PC-9 (cell line): ENCODE measurements at regions of chr5 and their contacts with region 1.

Region 1: GRCh38 chr5:151651997-151652645 is 34.6 kb downstream of the SPARC start:
- DNase-seq: peak; percentile 60 to 83
- H3K4me3 ChIP-seq: no peak overlapping the region
- H3K27ac ChIP-seq: no peak overlapping the region
- H3K4me1 ChIP-seq: peaks cover 13% of the 10 kb centered on the region
- H3K27me3 ChIP-seq: no peaks in the 10 kb centered on the region
- CTCF ChIP-seq: peak; percentile 94

Region 2: DNA sequence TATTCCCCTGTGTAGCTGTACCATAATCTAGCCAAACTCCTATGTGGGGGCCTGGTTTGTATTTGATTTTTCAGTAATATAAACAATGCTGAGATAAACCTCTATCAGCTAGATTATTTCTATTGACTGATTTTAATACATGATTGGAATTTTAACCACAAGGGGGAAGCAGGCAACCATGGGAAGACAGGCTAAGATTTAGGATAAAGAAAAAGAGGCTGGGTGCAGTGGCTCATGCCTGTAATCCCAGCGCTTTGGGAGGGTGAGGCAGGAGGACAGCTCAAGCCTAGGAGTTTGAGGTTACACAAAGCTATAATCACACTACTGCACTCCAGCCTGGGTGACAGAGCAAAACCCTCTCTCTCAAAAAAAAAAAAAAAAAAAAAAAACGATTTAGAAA is 649.9 kb before region 1 on chr5:
- CTCF ChIA-PET with region 1: interaction called, 3 read pairs
- POLR2A ChIA-PET with region 1: no interaction called
- intact Hi-C with region 1: loop called (anchors 5 kb)
- DNase-seq: peak in 1 of 2 experiments; percentile 39
- H3K4me3 ChIP-seq: no peak overlapping the region
- H3K27ac ChIP-seq: no peak overlapping the region
- H3K4me1 ChIP-seq: no peaks in the 10 kb centered on the region
- H3K27me3 ChIP-seq: no peaks in the 10 kb centered on the region
- CTCF ChIP-seq: peak; percentile 69

Region 3: GRCh38 chr5:151126199-151126645 is 525.9 kb before region 1 on chr5:
- CTCF ChIA-PET with region 1: no interaction called
- POLR2A ChIA-PET with region 1: no interaction called
- intact Hi-C with region 1: loop called (anchors 1 kb)
- DNase-seq: peak; percentile 46 to 64
- H3K4me3 ChIP-seq: no peak overlapping the region
- H3K27ac ChIP-seq: no peak overlapping the region
- H3K4me1 ChIP-seq: peaks cover 7% of the 10 kb centered on the region
- H3K27me3 ChIP-seq: no peaks in the 10 kb centered on the region
- CTCF ChIP-seq: peak; percentile 89

Region 4: DNA sequence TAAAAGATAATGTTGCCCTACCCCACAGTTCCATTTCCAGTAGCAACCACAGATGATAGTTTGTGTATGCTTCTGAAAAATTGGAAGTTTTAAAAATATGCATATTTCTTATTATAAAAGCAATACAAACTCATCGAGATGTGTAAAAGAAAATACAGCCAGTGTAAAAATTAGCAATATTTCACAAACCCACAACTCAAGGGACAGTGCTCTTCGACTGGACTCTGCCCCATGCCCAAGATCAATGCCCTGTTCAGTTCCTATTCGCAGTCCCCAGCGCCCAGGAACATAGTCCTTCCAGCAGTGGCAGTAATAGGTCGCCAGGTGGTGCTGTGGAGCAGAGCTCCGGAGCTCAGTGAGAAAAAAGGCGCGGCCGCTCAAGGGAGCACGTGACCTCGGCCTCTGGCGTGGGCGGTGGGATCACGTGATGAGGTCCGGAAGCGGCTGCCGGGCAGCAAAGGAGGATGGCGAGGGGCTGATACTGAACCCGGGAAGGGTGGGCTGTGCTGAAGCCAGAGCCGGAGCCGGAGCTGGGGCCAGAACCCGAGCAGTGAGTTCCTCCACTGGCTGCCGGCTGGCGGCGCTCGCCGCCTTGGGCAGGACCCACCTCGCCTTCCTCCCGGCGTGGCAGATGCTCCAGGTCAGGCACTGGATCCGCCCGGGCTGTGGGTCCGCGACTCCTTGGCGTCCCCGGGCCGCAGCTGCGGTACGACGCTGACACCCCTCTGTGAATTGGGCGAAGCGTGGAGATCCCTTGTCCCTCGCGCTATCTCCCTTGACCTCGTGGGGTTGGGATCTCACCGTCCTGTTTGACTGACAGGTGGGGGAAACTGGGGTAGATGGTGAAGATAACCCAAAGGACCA is 204.7 kb before region 1 on chr5 and contains the start of gene SLC36A1:
- CTCF ChIA-PET with region 1: interaction called, 23 read pairs
- POLR2A ChIA-PET with region 1: no interaction called
- intact Hi-C with region 1: loop called (anchors 1 kb)
- DNase-seq: peak; percentile 71 to 89
- H3K4me3 ChIP-seq: peak within 1 kb of the TSS; percentile 70
- H3K27ac ChIP-seq: no peak within 1 kb of the TSS
- H3K4me1 ChIP-seq: peaks cover 7% of the 10 kb centered on the region
- H3K27me3 ChIP-seq: no peaks in the 10 kb centered on the region
- CTCF ChIP-seq: peak; percentile 93
- total RNA-seq, gene SLC36A1: 7.4 and 11.0 TPM in 2 replicates

Region 5: GRCh38 chr5:151523335-151523734 is 128.8 kb before region 1 on chr5:
- CTCF ChIA-PET with region 1: interaction called, 17 read pairs
- POLR2A ChIA-PET with region 1: no interaction called
- intact Hi-C with region 1: loop called (anchors 1 kb)
- DNase-seq: peak in 1 of 2 experiments; percentile 41
- H3K4me3 ChIP-seq: no peak overlapping the region
- H3K27ac ChIP-seq: no peak overlapping the region
- H3K4me1 ChIP-seq: peaks cover 5% of the 10 kb centered on the region; the same call in 1 of the 2 replicates
- H3K27me3 ChIP-seq: no peaks in the 10 kb centered on the region
- CTCF ChIP-seq: peak; percentile 76

Region 6: DNA sequence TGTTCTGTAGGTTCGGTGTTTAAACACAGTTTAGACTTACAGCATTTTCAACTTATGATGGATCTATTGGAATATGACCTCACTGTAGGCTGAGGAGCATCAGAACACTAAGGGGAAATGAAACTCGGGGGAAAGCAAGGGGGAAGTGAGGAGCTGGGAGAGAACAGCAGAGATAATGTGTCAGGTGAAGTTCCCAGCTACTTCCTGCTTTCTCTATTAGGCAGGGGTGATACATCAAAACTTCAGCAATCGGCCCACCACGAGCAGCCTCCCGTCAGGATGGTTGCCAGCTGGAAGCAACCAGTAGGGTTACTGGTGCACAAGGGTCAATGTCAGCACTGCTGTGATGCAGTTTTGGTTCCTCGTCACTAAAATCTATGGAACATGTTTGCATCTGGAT is 95.3 kb before region 1 on chr5:
- CTCF ChIA-PET with region 1: no interaction called
- POLR2A ChIA-PET with region 1: no interaction called
- intact Hi-C with region 1: no loop called
- DNase-seq: no peak
- H3K4me3 ChIP-seq: no peak overlapping the region
- H3K27ac ChIP-seq: no peak overlapping the region
- H3K4me1 ChIP-seq: no peaks in the 10 kb centered on the region
- H3K27me3 ChIP-seq: peaks cover 15% of the 10 kb centered on the region; the same call in 1 of the 2 replicates
- CTCF ChIP-seq: no peak

Region 7: DNA sequence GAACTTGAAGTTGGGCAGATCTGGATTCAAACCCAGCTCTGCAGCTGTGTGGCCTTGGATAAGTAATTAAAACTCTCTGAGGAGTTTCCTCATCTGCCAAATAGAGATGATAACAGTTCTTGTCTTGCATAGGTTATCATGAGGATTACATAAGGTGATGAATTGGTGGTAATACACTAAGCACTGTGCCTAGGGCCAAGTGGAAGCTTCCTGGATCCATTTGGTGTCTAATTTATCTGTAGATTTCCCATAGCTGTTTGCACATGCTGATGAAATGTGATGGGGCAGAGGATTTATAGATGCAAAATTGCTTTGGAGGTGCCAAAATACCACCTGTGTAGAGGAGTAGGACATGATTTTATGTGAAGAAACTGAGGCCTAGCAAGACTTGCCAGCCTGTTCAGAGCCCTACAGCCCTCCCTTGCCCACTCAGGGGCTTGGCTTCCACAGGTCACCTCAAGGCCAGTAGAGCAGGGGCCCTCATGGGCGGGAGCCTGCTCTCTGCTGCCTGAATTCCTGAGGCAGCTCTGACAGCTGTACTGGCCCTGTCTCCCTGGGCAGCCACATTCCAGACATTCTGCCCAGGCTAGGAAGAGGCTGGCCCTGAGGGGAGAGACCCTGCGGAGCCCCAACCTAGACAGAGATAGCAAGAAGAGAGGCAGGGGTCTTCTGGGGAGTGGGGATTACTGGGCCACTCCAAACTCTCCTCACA is 55.1 kb before region 1 on chr5:
- CTCF ChIA-PET with region 1: no interaction called
- POLR2A ChIA-PET with region 1: interaction called, 6 read pairs
- intact Hi-C with region 1: loop called (anchors 5 kb)
- DNase-seq: peak; percentile 42 to 61
- H3K4me3 ChIP-seq: no peak overlapping the region
- H3K27ac ChIP-seq: 0 out of 2 replicates have a peak overlapping the region, but pooled peaks have one; percentile 11
- H3K4me1 ChIP-seq: peaks cover 39% of the 10 kb centered on the region
- H3K27me3 ChIP-seq: no peaks in the 10 kb centered on the region
- CTCF ChIP-seq: no peak

Region 8: DNA sequence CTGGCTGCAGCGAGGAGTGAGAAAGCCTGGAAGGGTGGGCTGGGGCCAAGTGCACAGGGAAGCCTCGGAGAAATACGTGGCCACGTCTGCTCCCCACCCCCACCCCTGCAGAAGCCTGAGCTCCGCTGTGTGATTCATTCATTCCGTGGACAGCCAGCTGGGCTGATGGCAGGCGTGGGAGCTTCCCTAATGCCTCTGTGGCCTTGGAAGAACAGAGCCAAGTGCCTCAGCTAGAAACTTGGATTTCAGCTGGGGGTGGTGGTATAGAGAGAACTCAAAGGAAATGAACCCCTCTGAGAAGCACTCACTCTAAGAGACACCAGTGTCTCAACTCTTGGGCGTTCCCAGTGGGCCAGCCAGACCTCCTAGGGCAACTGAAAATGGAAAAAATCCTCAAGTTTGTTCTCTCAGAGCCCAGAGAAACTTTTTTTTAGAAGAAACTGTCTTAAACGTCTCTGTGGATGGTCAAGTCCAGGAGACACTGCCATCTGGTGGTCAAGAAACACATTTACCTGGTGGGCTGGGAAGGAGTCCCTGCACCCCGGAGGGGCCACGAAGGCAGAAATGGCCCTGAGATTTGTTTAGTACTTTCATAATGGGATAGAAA is 88.3 kb after region 1 on chr5:
- CTCF ChIA-PET with region 1: interaction called, 10 read pairs
- POLR2A ChIA-PET with region 1: no interaction called
- intact Hi-C with region 1: no loop called
- DNase-seq: peak; percentile 46 to 49
- H3K4me3 ChIP-seq: no peak overlapping the region
- H3K27ac ChIP-seq: no peak overlapping the region
- H3K4me1 ChIP-seq: peaks cover 32% of the 10 kb centered on the region
- H3K27me3 ChIP-seq: no peaks in the 10 kb centered on the region
- CTCF ChIP-seq: peak; percentile 92